ENCODE measurements at regions of chr9 and their contacts with region 1.

Region 1: GRCh38 chr9:129610473-129611301 is 10.2 kb downstream of the C9orf50 start:
- DNase-seq: peak; percentile 78
- ATAC-seq: peak; percentile 77
- H3K4me3 Mint-ChIP-seq: peak overlapping the region; percentile 53
- H3K27ac Mint-ChIP-seq: peak overlapping the region; percentile 69
- H3K4me1 Mint-ChIP-seq: peaks cover 39% of the 10 kb centered on the region
- H3K27me3 Mint-ChIP-seq: peaks cover 4% of the 10 kb centered on the region

Region 2: DNA sequence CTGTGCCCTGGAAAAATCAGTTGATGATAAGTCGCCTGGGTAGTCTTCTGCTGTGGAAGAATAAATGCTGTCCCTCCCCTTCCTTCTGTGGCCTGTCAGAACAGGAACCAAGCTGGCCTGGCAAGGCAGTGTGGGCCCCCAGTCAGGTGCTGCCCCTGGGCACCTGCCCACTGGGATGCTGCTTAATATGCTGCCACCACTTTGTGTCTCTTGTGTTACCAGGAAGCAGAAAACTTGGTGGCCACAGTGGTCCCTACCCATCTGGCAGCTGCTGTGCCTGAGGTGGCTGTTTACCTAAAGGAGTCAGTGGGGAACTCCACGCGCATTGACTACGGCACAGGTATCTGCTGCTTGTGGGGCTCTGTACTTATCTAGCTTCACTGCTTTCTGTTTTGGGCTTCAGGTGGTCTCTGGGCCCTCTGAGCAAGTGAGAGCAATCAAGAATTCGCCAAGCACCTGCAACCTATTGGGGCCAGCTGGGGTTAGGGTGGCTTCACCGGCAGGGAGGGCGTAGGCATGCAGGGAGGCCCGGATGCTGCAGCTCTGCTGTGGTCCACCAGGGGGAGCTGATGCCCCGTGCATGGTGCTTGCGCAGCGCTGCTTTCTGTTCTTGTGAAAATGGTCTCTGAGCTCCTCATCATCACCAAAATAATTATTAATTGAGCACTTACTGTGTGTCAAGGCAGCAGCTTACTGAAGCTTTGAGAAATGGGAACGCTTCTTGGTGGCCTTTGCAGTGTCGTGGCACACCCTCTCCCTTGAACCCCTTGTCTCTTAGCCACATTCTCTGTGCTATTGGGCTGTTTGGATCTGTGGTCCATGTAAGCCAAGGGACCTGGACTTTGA is 479.2 kb before region 1 on chr9:
- CTCF ChIA-PET with region 1: interaction called, 37 read pairs
- DNase-seq: peak; percentile 89
- ATAC-seq: peak; percentile 97
- H3K4me3 Mint-ChIP-seq: no peak overlapping the region
- H3K27ac Mint-ChIP-seq: no peak overlapping the region
- H3K4me1 Mint-ChIP-seq: peaks cover 9% of the 10 kb centered on the region
- H3K27me3 Mint-ChIP-seq: no peaks in the 10 kb centered on the region

Region 3: DNA sequence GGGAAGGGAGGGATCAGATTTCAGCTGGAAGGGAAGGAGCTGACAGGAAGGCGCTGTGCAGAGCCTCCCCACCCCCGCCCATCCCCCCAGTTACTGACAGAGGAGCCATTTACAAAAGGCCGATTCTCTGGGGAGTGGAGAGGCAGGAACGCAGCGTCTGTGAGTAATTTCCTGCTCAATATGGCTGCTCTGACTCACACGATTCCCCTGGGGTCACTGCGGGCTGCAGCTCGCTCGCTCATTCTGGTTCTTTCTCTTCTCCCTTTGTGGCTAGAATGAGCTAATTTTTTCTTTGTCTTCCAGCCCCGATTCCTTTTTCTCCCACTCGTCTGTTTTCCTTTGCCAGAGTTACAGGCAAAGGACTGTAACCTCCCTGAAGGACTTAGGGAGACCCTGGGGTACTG is 470.7 kb before region 1 on chr9:
- CTCF ChIA-PET with region 1: interaction called, 43 read pairs
- DNase-seq: peak; percentile 93
- ATAC-seq: peak; percentile 86
- H3K4me3 Mint-ChIP-seq: peak overlapping the region; percentile 75
- H3K27ac Mint-ChIP-seq: peak overlapping the region; percentile 97
- H3K4me1 Mint-ChIP-seq: peaks cover 45% of the 10 kb centered on the region
- H3K27me3 Mint-ChIP-seq: no peaks in the 10 kb centered on the region

Region 4: GRCh38 chr9:129320575-129321263 is 290.0 kb before region 1 on chr9:
- CTCF ChIA-PET with region 1: interaction called, 10 read pairs
- DNase-seq: peak; percentile 60
- ATAC-seq: peak; percentile 84
- H3K4me3 Mint-ChIP-seq: peak overlapping the region; percentile 51
- H3K27ac Mint-ChIP-seq: no peak overlapping the region
- H3K4me1 Mint-ChIP-seq: peaks cover 9% of the 10 kb centered on the region
- H3K27me3 Mint-ChIP-seq: peaks cover 8% of the 10 kb centered on the region

Region 5: GRCh38 chr9:129584136-129584535 is 26.6 kb before region 1 on chr9:
- CTCF ChIA-PET with region 1: interaction called, 11 read pairs
- DNase-seq: peak; percentile 86
- ATAC-seq: peak; percentile 59
- H3K4me3 Mint-ChIP-seq: no peak overlapping the region
- H3K27ac Mint-ChIP-seq: peak overlapping the region; percentile 85
- H3K4me1 Mint-ChIP-seq: peaks cover 67% of the 10 kb centered on the region
- H3K27me3 Mint-ChIP-seq: peaks cover 5% of the 10 kb centered on the region

Region 6: DNA sequence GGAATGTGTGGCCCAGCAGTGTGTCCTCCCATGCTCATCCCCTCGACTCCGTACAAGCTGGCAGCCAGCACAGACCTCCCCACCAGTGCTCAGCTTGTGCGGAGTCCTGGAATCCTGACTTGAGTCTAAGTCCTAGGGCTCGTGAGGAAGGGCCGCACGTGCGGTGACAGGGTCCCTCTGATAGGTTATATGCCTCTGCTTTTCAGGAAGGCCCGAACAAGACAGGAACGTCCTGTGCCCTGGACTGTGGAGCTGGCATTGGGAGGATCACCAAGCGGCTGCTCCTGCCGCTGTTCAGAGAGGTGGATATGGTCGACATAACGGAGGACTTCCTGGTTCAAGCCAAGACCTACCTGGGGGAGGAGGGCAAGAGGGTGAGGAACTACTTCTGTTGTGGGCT is 23.2 kb after region 1 on chr9:
- CTCF ChIA-PET with region 1: no interaction called
- DNase-seq: no peak
- ATAC-seq: no peak
- H3K4me3 Mint-ChIP-seq: no peak overlapping the region
- H3K27ac Mint-ChIP-seq: no peak overlapping the region
- H3K4me1 Mint-ChIP-seq: peaks cover 33% of the 10 kb centered on the region
- H3K27me3 Mint-ChIP-seq: no peaks in the 10 kb centered on the region

Measured in activated CD8-positive, alpha-beta memory T cell treated with anti-CD3 and anti-CD28 coated beads, Interleukin-2, amount 10 ng/mL, durations not matched to agents 7 days and 5 days (primary cell).